Dendritic cell treated with granulocyte-macrophage colony-stimulating factor and Interleukin-4, amounts not matched to agents 40 ng/mL and 50 ng/mL, for 4 days (primary cell): ENCODE measurements at regions of chr11 and their contacts with region 1.

Region 1: GRCh38 chr11:34068111-34068510 is 16.6 kb downstream of the CAPRIN1 start:
- H3K4me3 Mint-ChIP-seq: no peak overlapping the region
- H3K27ac Mint-ChIP-seq: peak overlapping the region; percentile 65
- H3K4me1 Mint-ChIP-seq: peaks cover 30% of the 10 kb centered on the region
- H3K27me3 Mint-ChIP-seq: no peaks in the 10 kb centered on the region

Region 2: DNA sequence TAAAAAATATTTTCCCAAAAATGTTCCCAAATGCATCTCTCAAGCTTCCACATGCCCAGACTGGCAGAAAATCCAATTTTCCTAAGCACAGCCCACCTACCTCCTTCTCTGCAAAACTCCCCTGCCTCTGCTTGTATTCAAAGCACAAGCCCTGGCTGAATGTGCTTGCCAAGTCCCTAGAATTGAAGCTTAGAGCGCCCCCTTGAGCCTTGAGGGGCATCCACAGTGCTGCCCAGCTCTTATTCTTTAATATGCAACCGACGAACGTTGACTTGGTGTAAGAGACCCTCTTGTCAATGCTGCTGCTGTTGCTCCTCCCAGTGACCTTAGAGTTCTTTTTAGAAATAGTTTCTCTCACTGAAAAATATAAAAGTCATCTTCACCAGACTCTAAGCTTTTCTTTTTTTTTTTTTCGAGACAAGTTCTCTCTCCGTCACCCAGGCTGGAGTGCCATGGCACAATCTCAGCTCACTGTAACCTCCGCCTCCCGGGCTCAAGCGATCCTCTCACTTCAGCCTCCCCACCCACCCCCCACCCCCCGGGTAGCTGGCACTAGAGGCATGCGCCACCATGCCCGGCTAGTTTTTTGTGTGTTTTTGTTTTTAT is 80.0 kb before region 1 on chr11:
- intact Hi-C with region 1: no loop called
- H3K4me3 Mint-ChIP-seq: no peak overlapping the region
- H3K27ac Mint-ChIP-seq: no peak overlapping the region
- H3K4me1 Mint-ChIP-seq: no peaks in the 10 kb centered on the region
- H3K27me3 Mint-ChIP-seq: peaks cover 3% of the 10 kb centered on the region

Region 3: DNA sequence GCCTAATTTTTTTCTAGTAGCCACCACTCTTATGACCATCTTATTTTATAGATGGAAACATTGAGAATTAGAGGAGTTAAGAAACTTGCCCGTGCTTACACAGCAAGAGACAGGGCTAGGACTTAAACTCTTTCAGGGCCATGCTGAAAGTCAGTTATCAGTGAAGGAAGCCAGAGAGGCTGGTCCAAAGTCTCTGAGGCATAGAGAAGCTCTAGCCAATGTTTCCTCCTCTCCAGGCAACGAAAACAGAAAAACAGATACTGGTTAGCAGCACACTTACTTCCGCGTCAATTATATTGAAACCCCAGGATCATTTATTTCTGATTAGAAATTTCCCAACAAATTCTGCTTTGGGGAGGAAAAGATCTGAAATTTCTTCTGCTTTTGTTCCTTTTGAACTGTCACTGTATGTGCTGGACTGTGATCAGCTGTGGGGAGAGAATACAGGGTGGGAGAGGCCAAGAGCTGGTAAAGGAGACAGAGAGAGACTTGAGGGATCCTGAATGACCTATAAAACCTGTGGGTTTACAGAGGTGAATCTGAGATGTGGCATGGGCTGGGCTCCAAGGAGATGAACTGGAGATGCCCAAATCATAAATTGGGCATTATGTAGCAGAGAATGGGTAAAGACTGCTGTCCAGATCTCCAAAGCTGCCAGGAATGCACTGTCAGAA is 54.1 kb before region 1 on chr11:
- intact Hi-C with region 1: loop called (anchors 10 kb)
- H3K4me3 Mint-ChIP-seq: no peak overlapping the region
- H3K27ac Mint-ChIP-seq: no peak overlapping the region
- H3K4me1 Mint-ChIP-seq: no peaks in the 10 kb centered on the region
- H3K27me3 Mint-ChIP-seq: peaks cover 9% of the 10 kb centered on the region